ENCODE measurements at regions of chr7 and their contacts with region 1.

Region 1: GRCh38 chr7:132145466-132145865 is 430.8 kb downstream of the PLXNA4 start:
- DNase-seq: peak; percentile 88
- ATAC-seq: peak; percentile 100
- H3K4me3 ChIP-seq: no peak overlapping the region
- H3K27ac ChIP-seq: no peak overlapping the region
- H3K4me1 ChIP-seq: peaks cover 14% of the 10 kb centered on the region
- H3K27me3 ChIP-seq: no peaks in the 10 kb centered on the region
- CTCF ChIP-seq: no peak; the same call in none of the 2 replicates

Region 2: GRCh38 chr7:132117211-132117610 is 28.3 kb before region 1 on chr7:
- CTCF ChIA-PET with region 1: no interaction called
- POLR2A ChIA-PET with region 1: no interaction called
- intact Hi-C with region 1: loop called (anchors 2 kb)
- DNase-seq: peak; percentile 74
- ATAC-seq: peak; percentile 64
- H3K4me3 ChIP-seq: no peak overlapping the region
- H3K27ac ChIP-seq: peak overlapping the region; percentile 92
- H3K4me1 ChIP-seq: peaks cover 48% of the 10 kb centered on the region
- H3K27me3 ChIP-seq: no peaks in the 10 kb centered on the region
- CTCF ChIP-seq: no peak

Measured in PC-3 (cell line).